Activated T-helper 2 cell treated with anti-CD3 and anti-CD28 coated beads, Interferon-gamma antibody, Interleukin-2, Interleukin-4, amounts not matched to agents 10 μg/mL and 5 μg/mL and 100 μg/mL, durations not matched to agents 14 hours and 24 hours and 36 hours (primary cell): ENCODE measurements at regions of chr2 and their contacts with region 1.

Region 1: DNA sequence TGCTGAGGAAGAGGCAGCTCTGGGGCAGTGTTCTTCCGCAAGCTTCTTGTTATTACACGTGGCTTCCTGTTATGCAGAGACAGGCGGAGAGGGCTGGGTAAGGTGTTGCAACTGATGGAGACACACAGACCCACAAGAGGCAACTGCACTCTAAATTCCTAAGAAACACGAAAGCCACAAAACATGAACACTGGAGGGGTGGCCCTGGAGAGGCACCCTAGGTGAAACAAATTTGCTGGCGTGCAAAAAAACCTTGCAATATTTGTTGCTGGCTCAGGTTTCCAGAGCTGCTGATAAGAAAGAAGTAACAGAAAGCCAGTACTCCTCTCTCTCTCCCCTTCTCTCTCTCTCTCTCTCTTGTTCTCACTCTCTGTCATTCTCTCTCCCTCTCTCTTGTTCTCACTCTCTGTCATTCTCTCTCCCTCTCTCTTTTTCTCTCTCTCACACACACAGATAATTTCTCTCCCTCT is 31.8 kb downstream of the ARHGAP25 start:
- DNase-seq: peak; percentile 70
- H3K4me3 Mint-ChIP-seq: peak overlapping the region; percentile 68
- H3K27ac Mint-ChIP-seq: peak overlapping the region; percentile 93
- H3K4me1 Mint-ChIP-seq: peaks cover 91% of the 10 kb centered on the region
- H3K27me3 Mint-ChIP-seq: no peaks in the 10 kb centered on the region

Region 2: GRCh38 chr2:68723181-68723580 is 43.2 kb before region 1 on chr2:
- intact Hi-C with region 1: no loop called
- DNase-seq: no peak
- H3K4me3 Mint-ChIP-seq: no peak overlapping the region
- H3K27ac Mint-ChIP-seq: no peak overlapping the region
- H3K4me1 Mint-ChIP-seq: peaks cover 82% of the 10 kb centered on the region
- H3K27me3 Mint-ChIP-seq: no peaks in the 10 kb centered on the region

Region 3: DNA sequence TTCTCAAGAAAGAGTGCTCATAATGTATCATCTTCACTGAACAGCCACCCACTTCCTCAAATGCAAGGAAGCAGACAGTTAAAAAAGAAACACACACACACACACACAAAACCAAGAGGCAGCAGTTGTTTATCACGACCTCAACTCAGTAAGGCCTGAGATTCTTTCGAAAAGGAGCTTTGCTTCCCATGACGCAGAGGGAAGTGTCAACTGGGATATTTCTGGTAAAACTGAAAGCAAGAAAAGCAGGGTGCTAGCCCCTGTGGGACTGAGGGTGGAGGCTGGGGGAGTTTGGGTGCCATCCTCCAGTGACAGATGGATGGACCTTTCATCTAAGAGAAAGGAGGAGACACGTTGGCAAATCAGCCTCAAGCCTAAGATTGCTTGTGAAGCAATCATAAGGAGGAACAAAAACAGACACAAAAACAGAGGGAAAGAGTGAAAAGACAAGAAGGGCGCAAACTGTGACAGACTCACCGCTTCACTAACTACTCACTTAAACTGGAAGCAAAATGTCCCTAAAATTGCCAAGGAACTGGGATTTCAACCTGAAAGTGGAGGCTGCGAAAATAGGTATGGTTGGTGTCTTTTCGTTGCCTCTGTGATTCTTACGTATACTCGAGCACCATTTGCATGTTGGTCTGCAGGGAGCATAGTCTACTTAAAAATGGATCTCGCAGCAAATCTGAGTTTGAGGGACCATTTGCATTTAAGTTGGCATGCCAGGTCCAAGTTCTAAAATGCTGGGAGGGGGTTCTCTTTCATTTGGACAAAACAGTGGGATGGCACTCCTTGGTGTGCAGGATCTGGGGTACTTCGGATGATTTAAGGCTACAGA is 31.5 kb before region 1 on chr2 and contains the start of gene ARHGAP25:
- intact Hi-C with region 1: loop called (anchors 2 kb)
- DNase-seq: peak; percentile 49
- H3K4me3 Mint-ChIP-seq: no peak within 1 kb of the TSS
- H3K27ac Mint-ChIP-seq: no peak within 1 kb of the TSS
- H3K4me1 Mint-ChIP-seq: peaks cover 29% of the 10 kb centered on the region
- H3K27me3 Mint-ChIP-seq: no peaks in the 10 kb centered on the region
- total RNA-seq, gene ARHGAP25: 39.9 and 41.3 TPM in 2 replicates

Region 4: GRCh38 chr2:68741238-68741637 is 25.2 kb before region 1 on chr2:
- intact Hi-C with region 1: loop called (anchors 1 kb)
- DNase-seq: peak; percentile 4
- H3K4me3 Mint-ChIP-seq: peak overlapping the region; percentile 73
- H3K27ac Mint-ChIP-seq: peak overlapping the region; percentile 79
- H3K4me1 Mint-ChIP-seq: peaks cover 76% of the 10 kb centered on the region
- H3K27me3 Mint-ChIP-seq: no peaks in the 10 kb centered on the region